HepG2 (cell line): ENCODE measurements at regions of chrX and their contacts with region 1.

Region 1: GRCh38 chrX:12779534-12779933 is 11.7 kb upstream of the PRPS2 start:
- DNase-seq: peak; percentile 37
- ATAC-seq: no peak
- H3K4me3 ChIP-seq: no peak overlapping the region
- H3K27ac ChIP-seq: no peak overlapping the region
- H3K4me1 ChIP-seq: peaks cover 6% of the 10 kb centered on the region; the same call in 1 of the 2 replicates
- H3K27me3 ChIP-seq: no peaks in the 10 kb centered on the region
- CTCF ChIP-seq: no peak
- EP300 ChIP-seq: no peak
- POLR2A ChIP-seq: no peak
- RAD21 ChIP-seq: no peak

Region 2: GRCh38 chrX:12791257-12792228 is 12.0 kb after region 1 on chrX and contains the start of gene PRPS2:
- CTCF ChIA-PET with region 1: no interaction called
- POLR2A ChIA-PET with region 1: interaction called, 11 read pairs
- in situ Hi-C with region 1: no loop called
- intact Hi-C with region 1: no loop called
- DNase-seq: peak; percentile 16
- ATAC-seq: peak; percentile 90
- H3K4me3 ChIP-seq: peak within 1 kb of the TSS; percentile 69 to 74 (median 72)
- H3K27ac ChIP-seq: peak within 1 kb of the TSS; percentile 26
- H3K4me1 ChIP-seq: peaks cover 27% of the 10 kb centered on the region
- H3K27me3 ChIP-seq: no peaks in the 10 kb centered on the region; a peak in 1 of 5 replicates
- CTCF ChIP-seq: no peak
- EP300 ChIP-seq: no peak
- POLR2A ChIP-seq: peak in 1 of 2 experiments; percentile 77; a peak in 2 of 4 replicates
- RAD21 ChIP-seq: no peak
- total RNA-seq, gene PRPS2: 24.4 and 29.2 TPM in 2 replicates